ENCODE measurements at regions of chr6 and their contacts with region 1.

Region 1: DNA sequence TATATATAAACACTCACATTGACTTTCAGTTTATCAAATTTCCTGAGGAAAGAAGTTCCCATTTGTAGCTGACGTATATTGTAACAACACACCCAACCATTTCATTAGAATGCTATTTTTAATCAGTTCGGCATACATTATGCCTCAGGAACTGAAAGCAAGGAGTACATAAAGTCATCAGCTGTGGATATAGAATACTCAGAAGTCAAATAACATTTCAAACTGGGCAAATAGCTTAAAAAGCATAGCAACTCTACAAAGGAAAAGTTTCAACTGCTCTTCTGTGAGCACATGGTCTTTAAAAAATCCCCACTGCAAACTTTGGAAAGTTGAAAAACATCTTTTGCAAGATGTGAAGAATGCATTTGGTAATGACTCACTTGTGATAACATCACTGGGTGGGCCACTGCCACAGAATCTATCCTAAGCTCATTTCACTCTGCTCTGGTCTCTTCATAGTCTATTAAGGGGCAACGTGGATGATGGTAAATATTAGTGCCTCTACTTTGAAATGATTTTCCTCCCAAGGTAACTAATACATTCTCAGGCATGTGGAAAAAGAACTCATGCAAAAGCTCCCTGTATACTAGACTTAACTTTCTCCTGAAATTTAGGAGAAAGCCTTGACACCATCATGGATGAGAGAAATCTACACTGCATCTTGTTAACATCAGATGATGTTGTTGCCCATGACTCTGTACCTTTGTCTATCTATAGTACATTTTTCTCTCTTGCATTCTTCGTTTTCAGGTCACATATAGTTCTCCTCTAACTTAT is 49.2 kb downstream of the FYN start:
- DNase-seq: no peak
- ATAC-seq: peak; percentile 76
- H3K4me3 Mint-ChIP-seq: peak overlapping the region; percentile 53
- H3K27ac Mint-ChIP-seq: peak overlapping the region; percentile 86
- H3K4me1 Mint-ChIP-seq: peaks cover 76% of the 10 kb centered on the region
- H3K27me3 Mint-ChIP-seq: no peaks in the 10 kb centered on the region

Region 2: GRCh38 chr6:111668410-111668809 is 155.6 kb before region 1 on chr6:
- CTCF ChIA-PET with region 1: no interaction called
- DNase-seq: no peak
- ATAC-seq: no peak
- H3K4me3 Mint-ChIP-seq: no peak overlapping the region
- H3K27ac Mint-ChIP-seq: no peak overlapping the region
- H3K4me1 Mint-ChIP-seq: peaks cover 3% of the 10 kb centered on the region
- H3K27me3 Mint-ChIP-seq: no peaks in the 10 kb centered on the region

Region 3: DNA sequence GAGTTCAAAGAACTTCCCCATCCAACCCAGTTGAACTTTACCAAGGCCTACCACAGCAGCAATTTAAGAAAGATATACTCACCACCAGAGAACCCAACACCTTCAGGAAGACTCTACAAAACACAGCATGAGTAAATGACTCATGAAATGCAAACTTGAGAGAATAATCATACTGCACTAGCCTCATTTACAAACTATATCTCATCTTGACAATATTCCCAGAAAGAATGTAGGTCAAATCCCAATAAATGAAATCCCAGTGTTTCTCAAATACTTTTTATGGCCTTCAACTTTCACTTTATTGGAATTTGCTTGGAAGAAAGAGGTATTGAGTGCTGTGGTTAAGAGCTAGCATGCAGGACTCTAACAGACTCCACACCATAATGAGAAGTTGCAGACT is 10.8 kb before region 1 on chr6:
- CTCF ChIA-PET with region 1: interaction called, 32 read pairs
- DNase-seq: no peak
- ATAC-seq: peak; percentile 69
- H3K4me3 Mint-ChIP-seq: peak overlapping the region; percentile 64
- H3K27ac Mint-ChIP-seq: peak overlapping the region; percentile 81
- H3K4me1 Mint-ChIP-seq: peaks cover 83% of the 10 kb centered on the region
- H3K27me3 Mint-ChIP-seq: no peaks in the 10 kb centered on the region

Measured in activated CD8-positive, alpha-beta memory T cell treated with anti-CD3 and anti-CD28 coated beads, Interleukin-2, amount 10 ng/mL, durations not matched to agents 7 days and 5 days (primary cell).